AG04450 (cell line): ENCODE measurements at regions of chr16 and their contacts with region 1.

Region 1: GRCh38 chr16:73202161-73202729 is 154.3 kb upstream of the ZFHX3 start:
- DNase-seq: peak; percentile 93
- H3K4me3 ChIP-seq: no peak overlapping the region
- H3K27ac ChIP-seq: peak overlapping the region; percentile 72
- H3K27me3 ChIP-seq: no peaks in the 10 kb centered on the region
- CTCF ChIP-seq: no peak

Region 2: DNA sequence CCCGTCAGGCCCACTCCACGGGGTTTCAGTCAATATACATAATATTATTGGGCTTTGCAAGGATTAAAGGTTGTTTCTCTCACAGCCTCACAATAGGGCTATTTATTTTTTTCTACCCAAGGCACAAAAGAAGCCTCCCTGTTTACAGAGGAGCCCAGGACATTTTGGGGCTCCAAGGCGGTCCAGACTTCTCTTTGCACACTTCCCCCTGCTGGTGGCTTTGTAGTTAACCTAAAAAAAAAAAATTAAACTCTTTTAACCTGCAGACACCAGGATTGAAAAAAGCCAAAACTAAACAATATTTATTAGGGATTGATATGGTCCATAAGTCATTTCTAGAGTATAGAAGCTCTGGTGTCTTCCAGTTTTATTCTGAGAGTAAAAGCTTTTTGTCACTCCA is 15.4 kb after region 1 on chr16:
- CTCF ChIA-PET with region 1: interaction called, 9 read pairs
- POLR2A ChIA-PET with region 1: interaction called, 10 read pairs
- DNase-seq: no peak
- H3K4me3 ChIP-seq: no peak overlapping the region
- H3K27ac ChIP-seq: no peak overlapping the region
- H3K27me3 ChIP-seq: no peaks in the 10 kb centered on the region
- CTCF ChIP-seq: peak; percentile 19; the same call in 1 of the 2 replicates